ENCODE measurements at regions of chr3 and their contacts with region 1.

Region 1: GRCh38 chr3:88219138-88219792 is 69.5 kb downstream of the C3orf38 start:
- DNase-seq: no peak
- H3K4me3 ChIP-seq: no peak overlapping the region
- H3K27me3 ChIP-seq: no peaks in the 10 kb centered on the region
- CTCF ChIP-seq: peak; percentile 63

Region 2: DNA sequence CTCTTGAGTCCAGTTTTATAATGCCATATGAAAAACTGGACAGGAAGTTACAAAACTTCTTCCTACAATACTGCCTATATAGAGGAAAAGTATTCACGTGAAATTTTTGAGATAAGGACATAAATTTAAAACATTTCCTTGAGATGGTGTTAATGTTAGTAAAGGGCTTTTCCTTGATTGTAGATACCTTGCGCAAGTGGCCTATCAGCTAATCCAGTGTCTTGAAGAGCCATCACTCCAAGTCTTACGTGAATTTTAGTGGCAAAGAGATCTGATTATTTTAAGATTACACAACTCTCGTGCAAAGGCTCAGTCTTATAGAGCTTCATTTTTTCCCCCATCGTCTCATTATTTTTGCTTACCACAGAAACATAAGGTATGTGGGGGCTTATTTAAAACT is 51.1 kb before region 1 on chr3:
- CTCF ChIA-PET with region 1: no interaction called
- POLR2A ChIA-PET with region 1: interaction called, 13 read pairs
- DNase-seq: no peak
- H3K4me3 ChIP-seq: no peak overlapping the region
- H3K27me3 ChIP-seq: no peaks in the 10 kb centered on the region
- CTCF ChIP-seq: no peak

Region 3: GRCh38 chr3:88195951-88196434 is 23.3 kb before region 1 on chr3:
- CTCF ChIA-PET with region 1: no interaction called
- POLR2A ChIA-PET with region 1: no interaction called
- DNase-seq: no peak
- H3K4me3 ChIP-seq: no peak overlapping the region
- H3K27me3 ChIP-seq: no peaks in the 10 kb centered on the region
- CTCF ChIP-seq: no peak

Region 4: DNA sequence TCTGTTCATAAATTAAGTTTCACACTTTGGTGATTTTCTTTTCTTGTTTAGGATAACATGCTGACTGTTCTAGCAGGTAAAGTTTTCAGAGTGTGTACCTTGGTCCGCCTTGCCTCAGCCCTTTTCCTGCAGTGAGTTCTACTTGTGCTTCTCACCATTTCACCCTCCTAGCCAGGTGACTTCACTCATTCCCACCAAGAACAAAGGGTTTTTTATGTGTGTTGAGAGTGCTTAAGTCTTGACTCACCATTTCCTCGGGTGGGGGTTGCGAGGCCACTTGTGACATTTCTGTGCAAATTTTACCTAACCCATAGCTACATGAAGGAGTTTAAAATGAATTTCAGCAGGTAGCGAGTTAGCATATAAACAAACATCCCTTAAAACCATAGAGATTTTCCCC is 11.9 kb after region 1 on chr3:
- CTCF ChIA-PET with region 1: no interaction called
- POLR2A ChIA-PET with region 1: no interaction called
- DNase-seq: no peak
- H3K4me3 ChIP-seq: no peak overlapping the region
- H3K27me3 ChIP-seq: no peaks in the 10 kb centered on the region
- CTCF ChIP-seq: no peak

Measured in BJ (cell line).